PC-9 (cell line): ENCODE measurements at regions of chr3 and their contacts with region 1.

Region 1: GRCh38 chr3:69671082-69671952 is 67.9 kb upstream of the MITF start:
- DNase-seq: peak; percentile 18 to 42
- H3K4me3 ChIP-seq: no peak overlapping the region
- H3K27ac ChIP-seq: no peak overlapping the region
- H3K4me1 ChIP-seq: no peaks in the 10 kb centered on the region
- H3K27me3 ChIP-seq: no peaks in the 10 kb centered on the region
- CTCF ChIP-seq: peak; percentile 73

Region 2: GRCh38 chr3:69120879-69121464 is 550.3 kb before region 1 on chr3:
- CTCF ChIA-PET with region 1: no interaction called
- POLR2A ChIA-PET with region 1: no interaction called
- intact Hi-C with region 1: loop called (anchors 1 kb)
- DNase-seq: peak; percentile 64 to 77
- H3K4me3 ChIP-seq: no peak overlapping the region
- H3K27ac ChIP-seq: no peak overlapping the region
- H3K4me1 ChIP-seq: peaks cover 18% of the 10 kb centered on the region
- H3K27me3 ChIP-seq: no peaks in the 10 kb centered on the region
- CTCF ChIP-seq: peak; percentile 83

Region 3: DNA sequence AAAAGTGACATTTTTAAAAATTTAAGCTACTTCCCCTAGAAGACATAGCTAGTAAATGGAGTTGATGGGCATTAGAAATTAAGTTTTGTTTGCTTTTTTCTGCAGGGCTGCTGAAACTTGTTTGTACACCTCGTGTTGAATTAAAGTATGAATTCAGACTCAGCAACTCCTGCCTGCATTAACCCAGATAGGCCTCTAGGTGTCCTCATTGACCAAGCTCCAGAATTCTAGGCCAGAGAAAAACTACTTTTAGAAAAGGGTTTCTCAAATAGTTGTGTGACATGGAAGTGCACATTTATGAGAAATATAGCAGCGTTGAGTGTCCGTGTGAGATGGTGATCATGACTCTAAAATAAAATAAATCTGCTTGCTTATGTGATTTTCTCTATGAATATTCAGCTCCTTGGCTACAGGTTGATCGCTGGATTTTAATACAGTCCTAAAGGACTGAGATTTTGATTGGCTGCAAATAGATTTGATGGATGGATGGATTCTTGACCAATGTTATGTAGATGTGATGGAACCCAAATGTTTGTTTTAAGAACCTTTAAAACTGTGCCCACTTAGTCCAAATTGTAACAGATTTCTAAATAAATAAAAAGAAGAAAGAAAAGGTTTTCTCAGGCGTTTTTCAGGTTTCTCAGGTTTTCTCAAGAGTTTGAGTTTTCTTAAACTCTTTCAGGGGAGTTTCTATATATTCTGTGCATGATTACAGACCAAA is 509.6 kb before region 1 on chr3:
- CTCF ChIA-PET with region 1: no interaction called
- POLR2A ChIA-PET with region 1: no interaction called
- intact Hi-C with region 1: loop called (anchors 1 kb)
- DNase-seq: peak; percentile 29 to 47
- H3K4me3 ChIP-seq: no peak overlapping the region
- H3K27ac ChIP-seq: no peak overlapping the region
- H3K4me1 ChIP-seq: peaks cover 15% of the 10 kb centered on the region; the same call in 1 of the 2 replicates
- H3K27me3 ChIP-seq: no peaks in the 10 kb centered on the region
- CTCF ChIP-seq: peak; percentile 92

Region 4: DNA sequence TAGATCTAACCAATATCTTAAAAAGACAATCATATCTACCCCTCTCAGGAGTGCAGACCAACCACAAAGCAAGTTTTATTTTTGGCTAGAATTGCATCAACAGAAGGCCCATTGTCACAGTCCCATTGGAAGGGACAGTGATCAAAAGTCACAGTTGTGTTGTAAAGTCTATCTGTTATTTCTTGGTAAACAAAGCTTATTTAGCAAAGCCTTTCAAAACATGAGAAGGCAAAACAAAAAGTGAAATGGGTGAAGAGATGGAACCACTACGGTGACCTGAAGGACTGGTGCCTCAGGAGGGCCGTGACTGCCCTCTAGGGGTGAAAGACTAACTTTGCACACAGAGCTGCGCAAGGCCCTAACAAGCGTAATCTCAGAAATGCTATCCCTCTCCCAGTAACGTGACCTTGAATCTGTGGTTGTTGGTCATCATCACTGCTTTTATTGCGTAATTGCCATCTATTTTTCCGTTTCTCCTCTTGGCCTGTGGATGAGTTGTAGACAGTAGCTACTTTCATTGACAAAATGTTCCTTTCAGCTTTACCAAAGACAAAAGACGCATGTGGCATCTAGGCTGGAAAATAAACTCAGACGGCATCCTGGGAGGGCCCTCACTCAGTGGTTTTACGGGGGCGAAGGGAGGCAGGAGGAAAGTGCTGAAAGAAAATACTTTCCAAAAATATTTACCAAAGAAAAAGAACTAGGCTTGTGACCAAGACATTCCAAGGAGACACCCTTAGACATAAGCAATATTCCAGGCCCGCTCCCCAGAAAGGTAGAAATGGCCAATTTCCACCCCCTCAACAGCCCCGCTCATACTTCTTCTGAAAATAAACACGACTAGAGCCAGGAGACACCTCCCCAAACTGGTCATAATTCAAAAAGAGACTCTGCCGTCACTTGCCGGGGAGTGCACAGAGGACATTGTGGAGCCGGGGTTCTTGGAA is 364.8 kb before region 1 on chr3:
- CTCF ChIA-PET with region 1: interaction called, 3 read pairs
- POLR2A ChIA-PET with region 1: no interaction called
- intact Hi-C with region 1: loop called (anchors 5 kb)
- DNase-seq: peak; percentile 58 to 70
- H3K4me3 ChIP-seq: no peak overlapping the region
- H3K27ac ChIP-seq: peak overlapping the region; percentile 29; the same call in 1 of the 2 replicates
- H3K4me1 ChIP-seq: peaks cover 12% of the 10 kb centered on the region; the same call in 1 of the 2 replicates
- H3K27me3 ChIP-seq: no peaks in the 10 kb centered on the region
- CTCF ChIP-seq: peak; percentile 87

Region 5: DNA sequence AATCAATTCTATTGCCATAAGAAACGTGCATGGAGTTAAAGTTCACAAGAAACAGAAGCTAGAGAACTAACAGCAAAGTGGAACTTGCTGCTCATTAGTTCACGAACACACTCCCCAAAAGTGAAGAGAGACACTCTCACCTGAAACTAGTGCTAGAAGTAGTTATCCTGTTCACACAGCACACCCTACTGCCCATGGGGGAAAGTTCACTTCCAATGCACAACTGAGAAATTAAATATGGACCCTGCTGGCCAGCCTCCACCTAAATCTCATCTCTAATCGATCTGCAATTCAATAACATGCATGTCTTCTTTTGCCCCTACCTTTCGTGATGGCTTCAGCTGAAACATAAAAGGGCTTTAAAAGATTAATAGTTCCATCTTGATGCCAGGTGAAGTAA is 246.1 kb before region 1 on chr3:
- CTCF ChIA-PET with region 1: no interaction called
- POLR2A ChIA-PET with region 1: no interaction called
- intact Hi-C with region 1: loop called (anchors 2 kb)
- DNase-seq: peak in 1 of 2 experiments; percentile 34
- H3K4me3 ChIP-seq: no peak overlapping the region
- H3K27ac ChIP-seq: no peak overlapping the region
- H3K4me1 ChIP-seq: no peaks in the 10 kb centered on the region
- H3K27me3 ChIP-seq: no peaks in the 10 kb centered on the region
- CTCF ChIP-seq: peak; percentile 55; the same call in 1 of the 2 replicates

Region 6: DNA sequence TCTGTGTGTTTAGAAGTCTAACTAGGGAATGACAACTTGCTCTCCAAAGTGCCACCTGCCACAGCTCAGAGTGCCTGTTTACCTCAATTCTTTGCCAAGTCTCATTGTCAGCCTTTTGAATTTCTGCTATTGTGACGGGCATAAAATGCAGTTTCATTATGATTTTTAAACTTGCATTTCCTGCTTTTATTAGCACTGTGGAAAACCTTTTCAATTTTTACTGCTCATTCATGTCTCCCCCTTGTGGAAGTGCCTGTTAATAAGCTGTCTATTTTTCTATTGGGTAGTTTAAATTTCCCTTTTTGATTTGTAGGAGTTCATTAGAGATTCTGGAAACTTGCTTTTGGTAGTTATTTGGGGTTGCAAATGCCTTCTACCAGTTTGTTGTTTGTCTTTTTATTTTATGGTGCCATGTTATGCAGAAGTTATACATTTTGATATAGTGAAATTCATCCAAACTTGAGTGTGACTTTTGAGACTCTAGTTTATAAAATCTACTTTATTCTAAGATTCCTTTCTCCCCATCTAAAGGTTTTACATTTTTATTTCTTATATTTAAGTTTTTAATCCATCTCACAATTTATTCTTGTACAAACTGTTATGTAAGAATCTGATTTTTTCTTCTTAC is 231.6 kb before region 1 on chr3:
- CTCF ChIA-PET with region 1: no interaction called
- POLR2A ChIA-PET with region 1: no interaction called
- intact Hi-C with region 1: loop called (anchors 2 kb)
- DNase-seq: peak in 1 of 2 experiments; percentile 3
- H3K4me3 ChIP-seq: no peak overlapping the region
- H3K27ac ChIP-seq: no peak overlapping the region
- H3K4me1 ChIP-seq: no peaks in the 10 kb centered on the region
- H3K27me3 ChIP-seq: no peaks in the 10 kb centered on the region
- CTCF ChIP-seq: peak; percentile 68

Region 7: DNA sequence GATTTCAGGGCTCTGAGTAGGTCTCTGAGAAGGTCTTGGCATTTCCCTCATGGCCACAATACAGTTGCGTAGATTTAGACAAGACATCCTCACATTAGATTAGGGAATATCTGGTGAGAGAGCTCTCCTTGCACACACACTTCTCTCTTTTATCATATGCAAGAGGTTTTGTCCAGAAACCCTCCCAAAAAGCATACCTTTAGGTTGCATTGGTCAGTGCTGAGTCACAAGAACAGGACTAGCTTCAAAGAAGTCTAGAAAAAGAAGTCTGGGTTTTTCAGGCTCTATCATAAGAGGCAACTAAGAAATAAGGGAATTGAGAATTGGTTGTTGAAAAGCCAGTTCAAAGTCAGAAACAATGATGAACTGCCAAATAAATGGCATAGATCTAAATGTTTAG is 27.9 kb after region 1 on chr3:
- CTCF ChIA-PET with region 1: interaction called, 11 read pairs
- POLR2A ChIA-PET with region 1: no interaction called
- intact Hi-C with region 1: no loop called
- DNase-seq: no peak
- H3K4me3 ChIP-seq: no peak overlapping the region
- H3K27ac ChIP-seq: no peak overlapping the region
- H3K4me1 ChIP-seq: peaks cover 10% of the 10 kb centered on the region; the same call in 1 of the 2 replicates
- H3K27me3 ChIP-seq: no peaks in the 10 kb centered on the region
- CTCF ChIP-seq: no peak